Activated CD4-positive, alpha-beta memory T cell treated with anti-CD3 and anti-CD28 coated beads, Interleukin-2, amount 10 ng/mL, durations not matched to agents 7 days and 5 days (primary cell): ENCODE measurements at regions of chr2 and their contacts with region 1.

Region 1: GRCh38 chr2:237685408-237685807 is 58.0 kb downstream of the LRRFIP1 start:
- DNase-seq: no peak
- H3K4me3 Mint-ChIP-seq: no peak overlapping the region
- H3K27ac Mint-ChIP-seq: no peak overlapping the region
- H3K4me1 Mint-ChIP-seq: peaks cover 48% of the 10 kb centered on the region
- H3K27me3 Mint-ChIP-seq: no peaks in the 10 kb centered on the region

Region 2: GRCh38 chr2:237700512-237701032 is 15.2 kb after region 1 on chr2:
- CTCF ChIA-PET with region 1: interaction called, 13 read pairs
- POLR2A ChIA-PET with region 1: interaction called, 143 read pairs
- DNase-seq: peak; percentile 70
- H3K4me3 Mint-ChIP-seq: peak overlapping the region; percentile 45
- H3K27ac Mint-ChIP-seq: peak overlapping the region; percentile 88
- H3K4me1 Mint-ChIP-seq: peaks cover 96% of the 10 kb centered on the region
- H3K27me3 Mint-ChIP-seq: no peaks in the 10 kb centered on the region

Region 3: GRCh38 chr2:237858294-237859081 is 173.1 kb after region 1 on chr2:
- CTCF ChIA-PET with region 1: no interaction called
- POLR2A ChIA-PET with region 1: no interaction called
- DNase-seq: peak; percentile 64
- H3K4me3 Mint-ChIP-seq: peak overlapping the region; percentile 46
- H3K27ac Mint-ChIP-seq: no peak overlapping the region
- H3K4me1 Mint-ChIP-seq: peaks cover 18% of the 10 kb centered on the region
- H3K27me3 Mint-ChIP-seq: peaks cover 53% of the 10 kb centered on the region